BJ (cell line): ENCODE measurements at regions of chr5 and their contacts with region 1.

Region 1: DNA sequence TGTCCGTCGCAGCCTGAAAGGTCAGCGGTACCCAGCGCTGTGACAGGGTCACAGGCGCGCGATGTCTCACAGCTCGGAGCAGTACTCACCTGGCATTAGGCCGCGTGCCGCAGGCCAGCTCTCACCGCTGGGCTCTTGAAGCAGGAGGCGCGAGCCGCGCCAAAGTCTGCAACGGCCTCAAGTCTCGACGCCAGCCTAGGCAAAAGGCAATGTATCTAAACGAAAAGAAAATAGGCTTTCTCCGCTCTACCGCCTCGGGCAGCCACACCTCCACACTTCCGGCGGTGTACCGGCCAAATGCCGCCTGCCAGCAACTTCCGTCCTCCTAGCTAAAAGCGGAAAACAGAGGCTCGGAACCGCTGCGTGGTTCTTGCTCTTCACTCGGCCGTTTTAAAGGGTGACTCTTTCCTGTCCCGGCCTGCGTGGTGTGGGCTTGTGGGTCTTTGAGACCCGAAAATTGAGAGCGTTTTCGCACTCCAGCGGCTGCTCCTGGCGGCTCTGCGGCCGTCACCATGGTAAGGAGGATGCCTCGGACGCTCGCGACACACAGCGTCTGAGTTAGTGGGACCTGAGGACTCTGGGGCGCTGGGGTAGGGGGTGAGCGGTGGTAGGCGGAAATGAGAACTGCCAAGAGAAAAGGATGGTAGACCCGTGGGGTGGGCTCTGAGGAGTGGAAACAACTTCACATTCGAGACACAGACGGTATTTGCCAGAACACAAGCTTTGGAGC is at the starts of genes GFM2 and NSA2:
- DNase-seq: peak; percentile 69
- H3K4me3 ChIP-seq: peak within 1 kb of the TSS; percentile 95
- H3K27me3 ChIP-seq: no peaks in the 10 kb centered on the region
- CTCF ChIP-seq: no peak
- polyA plus RNA-seq, gene GFM2: 19.3 and 35.6 TPM in 2 replicates
- polyA plus RNA-seq, gene NSA2: 11.7 and 66.8 TPM in 2 replicates

Region 2: GRCh38 chr5:76283670-76284069 is 1516.7 kb after region 1 on chr5:
- CTCF ChIA-PET with region 1: no interaction called
- POLR2A ChIA-PET with region 1: interaction called, 12 read pairs
- DNase-seq: no peak
- H3K4me3 ChIP-seq: no peak overlapping the region
- H3K27me3 ChIP-seq: no peaks in the 10 kb centered on the region
- CTCF ChIP-seq: no peak